Activated CD4-positive, alpha-beta memory T cell treated with anti-CD3 and anti-CD28 coated beads for 36 hours (primary cell): ENCODE measurements at regions of chr14 and their contacts with region 1.

Region 1: GRCh38 chr14:77799863-77800730 is at the start of gene ADCK1:
- DNase-seq: peak; percentile 90
- H3K4me3 Mint-ChIP-seq: peak within 1 kb of the TSS; percentile 86
- H3K27ac Mint-ChIP-seq: peak within 1 kb of the TSS; percentile 84
- H3K4me1 Mint-ChIP-seq: peaks cover 11% of the 10 kb centered on the region
- H3K27me3 Mint-ChIP-seq: no peaks in the 10 kb centered on the region
- total RNA-seq, gene ADCK1: 3.2 to 3.7 TPM

Region 2: GRCh38 chr14:77659831-77660230 is 140.3 kb before region 1 on chr14:
- CTCF ChIA-PET with region 1: no interaction called
- POLR2A ChIA-PET with region 1: no interaction called
- intact Hi-C with region 1: loop called (anchors 5 kb)
- DNase-seq: no peak
- H3K4me3 Mint-ChIP-seq: no peak overlapping the region
- H3K27ac Mint-ChIP-seq: no peak overlapping the region
- H3K4me1 Mint-ChIP-seq: no peaks in the 10 kb centered on the region
- H3K27me3 Mint-ChIP-seq: no peaks in the 10 kb centered on the region

Region 3: GRCh38 chr14:77681196-77682157 is 118.6 kb before region 1 on chr14:
- CTCF ChIA-PET with region 1: no interaction called
- POLR2A ChIA-PET with region 1: no interaction called
- intact Hi-C with region 1: no loop called
- DNase-seq: no peak
- H3K4me3 Mint-ChIP-seq: no peak overlapping the region
- H3K27ac Mint-ChIP-seq: no peak overlapping the region
- H3K4me1 Mint-ChIP-seq: peaks cover 7% of the 10 kb centered on the region
- H3K27me3 Mint-ChIP-seq: no peaks in the 10 kb centered on the region

Region 4: DNA sequence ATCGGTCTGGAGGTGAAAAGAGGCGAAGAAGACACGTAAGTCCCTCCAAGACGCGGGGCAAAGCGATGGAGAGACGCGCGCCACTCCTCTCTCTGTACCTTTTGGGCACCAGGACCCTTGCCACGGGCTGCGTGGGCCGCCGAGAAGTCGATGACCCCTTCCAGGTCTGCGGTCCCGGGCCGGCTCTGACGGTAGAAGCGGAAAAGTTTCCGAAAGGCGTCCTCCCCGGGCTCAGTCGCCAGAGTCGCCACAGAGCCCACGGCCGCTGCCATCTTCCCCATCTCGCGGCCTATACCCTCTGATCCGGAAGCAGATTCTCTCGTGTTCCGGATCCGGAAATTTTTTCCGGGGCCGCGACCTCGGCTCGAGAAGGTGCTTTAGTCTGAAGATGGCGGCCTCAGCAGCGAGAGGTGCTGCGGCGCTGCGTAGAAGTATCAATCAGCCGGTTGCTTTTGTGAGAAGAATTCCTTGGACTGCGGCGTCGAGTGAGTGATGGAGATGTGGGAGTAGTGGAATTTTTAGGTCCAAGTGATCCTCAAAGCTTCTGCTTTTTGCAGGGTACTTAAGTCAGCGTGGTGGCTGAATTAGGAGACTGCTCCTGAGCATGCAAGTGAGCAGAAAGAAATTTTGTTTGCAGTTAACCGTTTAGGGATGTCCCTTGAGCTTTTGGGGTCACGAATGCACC is 92.2 kb before region 1 on chr14 and contains the starts of genes ALKBH1 and SLIRP:
- CTCF ChIA-PET with region 1: no interaction called
- POLR2A ChIA-PET with region 1: interaction called, 3 read pairs
- intact Hi-C with region 1: loop called (anchors 1 kb)
- DNase-seq: peak; percentile 93
- H3K4me3 Mint-ChIP-seq: peak within 1 kb of the TSS; percentile 90
- H3K27ac Mint-ChIP-seq: peak within 1 kb of the TSS; percentile 86
- H3K4me1 Mint-ChIP-seq: peaks cover 45% of the 10 kb centered on the region
- H3K27me3 Mint-ChIP-seq: no peaks in the 10 kb centered on the region
- total RNA-seq, gene ALKBH1: 13.2 to 16.1 TPM
- total RNA-seq, gene SLIRP: 138 to 146 TPM

Region 5: DNA sequence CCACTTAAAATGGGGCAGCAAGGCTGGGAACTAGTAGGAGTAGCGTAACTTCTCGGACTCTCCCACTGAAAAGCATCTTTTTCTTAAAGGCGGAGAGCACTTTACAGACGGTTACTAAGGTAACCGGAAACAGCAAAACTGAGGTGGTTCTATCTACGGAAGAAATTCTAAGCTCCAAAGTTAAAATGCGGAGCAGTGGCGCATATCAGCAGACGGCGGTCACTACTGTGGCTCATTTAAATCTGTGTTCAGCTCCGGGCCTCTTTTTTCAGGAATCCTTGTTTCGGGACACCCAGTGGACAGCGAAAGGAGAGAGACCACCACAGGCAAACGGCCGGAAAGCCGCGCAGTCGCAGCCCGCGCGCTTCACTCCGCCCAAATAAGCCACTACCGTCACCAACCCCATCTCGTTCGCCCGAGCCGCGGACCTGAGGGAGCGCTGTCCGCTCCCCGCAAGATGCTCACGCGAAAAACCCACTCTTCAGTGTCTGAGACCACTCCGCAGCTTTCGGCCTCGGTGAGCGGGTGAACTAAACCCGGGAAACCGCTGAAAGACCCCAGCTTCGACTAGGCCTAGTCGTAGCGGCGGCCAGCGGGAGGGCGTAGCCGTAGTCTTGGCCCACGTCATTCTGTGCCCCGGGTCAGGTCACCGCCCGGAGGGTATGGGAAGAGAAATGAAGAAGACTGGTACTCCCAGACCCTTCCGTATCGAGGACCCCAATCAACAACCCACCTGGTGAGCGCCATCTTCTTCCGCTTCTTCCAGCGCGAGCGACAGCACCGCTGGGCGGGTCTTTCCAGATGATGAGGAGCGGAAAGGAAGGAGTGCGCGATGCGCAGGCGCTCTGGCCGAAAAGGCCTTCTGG is 39.5 kb before region 1 on chr14 and contains the start of gene SNW1:
- CTCF ChIA-PET with region 1: interaction called, 3 read pairs
- POLR2A ChIA-PET with region 1: interaction called, 10 read pairs
- intact Hi-C with region 1: loop called (anchors 1 kb)
- DNase-seq: peak; percentile 95
- H3K4me3 Mint-ChIP-seq: peak within 1 kb of the TSS; percentile 95
- H3K27ac Mint-ChIP-seq: peak within 1 kb of the TSS; percentile 96
- H3K4me1 Mint-ChIP-seq: peaks cover 32% of the 10 kb centered on the region
- H3K27me3 Mint-ChIP-seq: no peaks in the 10 kb centered on the region
- total RNA-seq, gene SNW1: 115 to 120 TPM

Region 6: GRCh38 chr14:78196323-78196722 is 396.2 kb after region 1 on chr14:
- CTCF ChIA-PET with region 1: no interaction called
- POLR2A ChIA-PET with region 1: no interaction called
- intact Hi-C with region 1: no loop called
- DNase-seq: no peak
- H3K4me3 Mint-ChIP-seq: no peak overlapping the region
- H3K27ac Mint-ChIP-seq: no peak overlapping the region
- H3K4me1 Mint-ChIP-seq: no peaks in the 10 kb centered on the region
- H3K27me3 Mint-ChIP-seq: no peaks in the 10 kb centered on the region